Activated CD8-positive, alpha-beta T cell treated with anti-CD3 and anti-CD28 coated beads, Interleukin-2, amount 10 ng/mL, durations not matched to agents 7 days and 5 days (primary cell): ENCODE measurements at regions of chr18 and their contacts with region 1.

Region 1: DNA sequence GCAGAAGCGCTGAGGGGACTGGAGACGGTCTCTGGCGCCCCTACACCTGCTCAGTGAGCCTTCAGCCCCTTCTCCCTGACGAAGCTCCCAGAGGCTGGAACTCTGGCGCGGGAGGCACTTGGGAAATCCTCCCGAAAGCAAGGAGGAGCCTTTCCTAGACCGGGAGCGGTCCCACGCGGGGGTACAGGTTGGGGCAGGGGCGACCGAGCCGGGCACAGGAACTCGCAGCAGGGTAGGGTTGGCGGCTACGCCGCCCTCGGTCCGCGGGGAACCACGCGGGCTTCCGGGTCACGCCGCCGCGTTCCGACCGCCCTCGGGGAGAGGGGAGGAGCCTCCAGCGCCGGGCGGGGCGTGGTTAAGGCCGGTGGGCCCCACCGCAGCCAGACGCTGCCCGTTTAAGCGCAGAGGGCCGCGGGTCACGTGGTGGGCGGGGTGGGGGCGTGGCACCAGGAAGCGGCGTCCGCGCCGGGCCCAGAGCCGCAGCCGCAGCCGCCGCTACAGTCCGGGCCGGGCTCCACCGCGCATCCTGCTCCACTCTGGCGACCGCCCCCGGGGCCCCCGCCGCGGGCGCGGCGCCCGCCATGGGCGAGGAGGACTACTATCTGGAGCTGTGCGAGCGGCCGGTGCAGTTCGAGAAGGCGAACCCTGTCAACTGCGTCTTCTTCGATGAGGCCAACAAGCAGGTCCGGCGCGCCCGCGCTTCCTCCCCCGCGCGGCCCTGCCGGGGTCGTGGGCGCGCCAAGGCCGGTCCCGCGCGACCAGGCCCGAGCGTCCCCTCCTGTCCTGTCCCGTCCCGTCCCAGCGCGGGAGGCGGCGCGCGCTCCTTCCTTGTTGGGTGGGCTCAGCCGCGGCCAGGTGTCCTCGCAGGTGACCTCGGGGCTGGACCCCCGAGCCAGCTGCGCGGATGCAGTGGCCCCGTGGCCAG is at the start of gene RMC1:
- DNase-seq: peak; percentile 97
- ATAC-seq: peak; percentile 89
- H3K4me3 Mint-ChIP-seq: peak within 1 kb of the TSS; percentile 97
- H3K27ac Mint-ChIP-seq: peak within 1 kb of the TSS; percentile 87
- H3K4me1 Mint-ChIP-seq: peaks cover 60% of the 10 kb centered on the region
- H3K27me3 Mint-ChIP-seq: no peaks in the 10 kb centered on the region
- total RNA-seq, gene RMC1: 47.6 to 48.3 TPM

Region 2: GRCh38 chr18:23194155-23194996 is 308.9 kb before region 1 on chr18:
- CTCF ChIA-PET with region 1: no interaction called
- POLR2A ChIA-PET with region 1: no interaction called
- DNase-seq: no peak
- ATAC-seq: no peak
- H3K4me3 Mint-ChIP-seq: no peak overlapping the region
- H3K27ac Mint-ChIP-seq: no peak overlapping the region
- H3K4me1 Mint-ChIP-seq: peaks cover 15% of the 10 kb centered on the region
- H3K27me3 Mint-ChIP-seq: no peaks in the 10 kb centered on the region

Region 3: GRCh38 chr18:23452728-23453679 is 50.3 kb before region 1 on chr18 and contains the start of gene RIOK3:
- CTCF ChIA-PET with region 1: interaction called, 16 read pairs
- POLR2A ChIA-PET with region 1: interaction called, 4 read pairs
- DNase-seq: peak; percentile 95
- ATAC-seq: peak; percentile 98
- H3K4me3 Mint-ChIP-seq: peak within 1 kb of the TSS; percentile 99
- H3K27ac Mint-ChIP-seq: peak within 1 kb of the TSS; percentile 82
- H3K4me1 Mint-ChIP-seq: peaks cover 37% of the 10 kb centered on the region
- H3K27me3 Mint-ChIP-seq: no peaks in the 10 kb centered on the region
- total RNA-seq, gene RIOK3: 53.6 to 69.3 TPM

Region 4: DNA sequence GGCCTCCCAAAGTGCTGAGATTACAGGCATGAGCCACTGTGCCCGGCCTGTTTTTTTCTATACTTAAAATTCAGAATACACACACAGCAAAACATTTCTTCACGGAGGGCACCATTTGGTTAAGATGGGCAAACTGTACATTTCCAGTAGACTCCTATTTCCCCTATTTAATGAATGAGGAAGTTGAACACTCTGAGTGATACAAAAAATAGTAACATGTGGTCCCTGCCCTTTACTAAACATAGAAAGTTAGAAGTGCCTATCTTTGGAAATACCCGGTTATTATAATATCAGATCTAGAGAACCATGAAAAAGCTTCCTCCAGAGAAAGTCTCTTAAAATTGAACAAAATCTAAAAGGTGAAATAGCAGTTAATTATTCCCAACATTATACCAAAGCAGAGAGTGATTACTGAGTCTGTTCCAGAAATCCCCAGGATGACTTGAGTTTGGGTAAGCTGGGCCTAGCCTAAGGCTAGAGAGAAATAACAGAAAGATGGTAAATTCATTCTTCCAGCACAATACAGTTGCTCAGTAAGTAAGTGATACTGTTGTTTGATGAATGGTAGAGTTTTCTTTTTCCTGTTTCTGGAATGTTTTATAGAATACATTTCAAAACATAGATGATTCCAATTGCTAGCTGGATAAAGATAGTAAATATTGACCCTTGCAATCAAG is 23.3 kb before region 1 on chr18:
- CTCF ChIA-PET with region 1: interaction called, 23 read pairs
- POLR2A ChIA-PET with region 1: interaction called, 5 read pairs
- DNase-seq: no peak
- ATAC-seq: no peak
- H3K4me3 Mint-ChIP-seq: no peak overlapping the region
- H3K27ac Mint-ChIP-seq: no peak overlapping the region
- H3K4me1 Mint-ChIP-seq: no peaks in the 10 kb centered on the region
- H3K27me3 Mint-ChIP-seq: no peaks in the 10 kb centered on the region

Region 5: GRCh38 chr18:23487738-23488570 is 15.3 kb before region 1 on chr18:
- CTCF ChIA-PET with region 1: interaction called, 51 read pairs
- POLR2A ChIA-PET with region 1: interaction called, 9 read pairs
- DNase-seq: peak; percentile 70
- ATAC-seq: peak; percentile 82
- H3K4me3 Mint-ChIP-seq: peak overlapping the region; percentile 47
- H3K27ac Mint-ChIP-seq: peak overlapping the region; percentile 89
- H3K4me1 Mint-ChIP-seq: peaks cover 19% of the 10 kb centered on the region
- H3K27me3 Mint-ChIP-seq: no peaks in the 10 kb centered on the region

Region 6: GRCh38 chr18:23515911-23516546 is 12.7 kb after region 1 on chr18:
- CTCF ChIA-PET with region 1: interaction called, 42 read pairs
- POLR2A ChIA-PET with region 1: no interaction called
- DNase-seq: peak; percentile 85
- ATAC-seq: peak; percentile 95
- H3K4me3 Mint-ChIP-seq: no peak overlapping the region
- H3K27ac Mint-ChIP-seq: peak overlapping the region; percentile 45
- H3K4me1 Mint-ChIP-seq: peaks cover 26% of the 10 kb centered on the region
- H3K27me3 Mint-ChIP-seq: no peaks in the 10 kb centered on the region

Region 7: DNA sequence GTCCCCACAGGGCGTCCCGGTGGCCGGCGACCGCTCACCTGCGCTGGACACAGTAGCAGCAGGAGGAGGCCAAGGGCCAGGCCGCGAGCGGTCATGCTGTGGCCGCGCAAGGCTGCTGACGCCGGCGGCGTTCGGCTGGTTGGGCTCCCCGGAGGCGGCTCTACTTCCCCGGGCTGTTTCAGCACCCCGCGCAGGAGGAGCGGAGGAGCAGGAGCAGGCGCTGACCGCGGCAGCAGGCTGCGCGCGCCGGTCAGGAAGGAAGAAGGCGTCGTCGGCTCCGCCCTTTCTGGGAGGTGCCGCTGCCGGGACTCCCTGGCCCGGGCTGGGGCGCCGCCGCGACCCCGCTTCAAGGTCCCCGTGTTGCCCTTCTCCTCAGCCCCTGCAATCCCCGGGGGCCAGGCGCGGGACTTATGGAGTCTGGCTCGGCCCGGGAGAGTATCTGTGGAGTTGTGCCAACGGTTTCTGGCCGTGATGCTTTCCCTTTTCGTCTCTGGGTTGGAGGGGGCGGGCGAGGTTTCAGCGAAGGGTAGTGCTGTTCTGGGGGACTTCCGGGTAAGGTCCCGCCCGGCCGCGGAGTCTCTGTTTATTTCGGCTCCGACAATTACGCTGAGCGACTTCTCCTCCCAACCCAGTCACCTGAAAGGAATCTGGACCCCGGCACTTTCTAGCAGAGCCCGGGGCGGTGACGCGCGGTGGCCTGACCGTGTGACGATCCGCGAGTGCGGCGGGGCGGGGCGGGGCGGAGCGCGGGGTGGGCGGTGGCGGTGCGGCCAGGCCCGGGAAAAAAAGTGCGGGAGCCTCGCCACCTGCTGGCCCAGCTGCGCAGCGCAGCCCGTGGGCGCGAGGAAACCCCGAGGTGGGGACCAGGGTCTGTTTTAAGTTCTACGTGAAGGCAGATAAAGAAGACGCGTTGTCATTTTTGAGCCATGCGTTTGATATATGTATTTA is 83.2 kb after region 1 on chr18 and contains the start of gene NPC1:
- CTCF ChIA-PET with region 1: interaction called, 20 read pairs
- POLR2A ChIA-PET with region 1: interaction called, 3 read pairs
- DNase-seq: peak; percentile 94
- ATAC-seq: peak; percentile 92
- H3K4me3 Mint-ChIP-seq: peak within 1 kb of the TSS; percentile 93
- H3K27ac Mint-ChIP-seq: peak within 1 kb of the TSS; percentile 96
- H3K4me1 Mint-ChIP-seq: peaks cover 44% of the 10 kb centered on the region
- H3K27me3 Mint-ChIP-seq: peaks cover 4% of the 10 kb centered on the region
- total RNA-seq, gene NPC1: 34.6 to 35.0 TPM

Region 8: GRCh38 chr18:23703057-23703986 is 200.0 kb after region 1 on chr18:
- CTCF ChIA-PET with region 1: interaction called, 23 read pairs
- POLR2A ChIA-PET with region 1: no interaction called
- DNase-seq: peak; percentile 40
- ATAC-seq: peak; percentile 75
- H3K4me3 Mint-ChIP-seq: no peak overlapping the region
- H3K27ac Mint-ChIP-seq: no peak overlapping the region
- H3K4me1 Mint-ChIP-seq: peaks cover 10% of the 10 kb centered on the region
- H3K27me3 Mint-ChIP-seq: peaks cover 33% of the 10 kb centered on the region